ENCODE measurements at regions of chr15 and their contacts with region 1.

Region 1: GRCh38 chr15:60128000-60128376 is 123.9 kb downstream of the FOXB1 start:
- DNase-seq: no peak
- ATAC-seq: no peak
- H3K4me3 Mint-ChIP-seq: peak overlapping the region; percentile 80
- H3K27ac Mint-ChIP-seq: peak overlapping the region; percentile 90
- H3K4me1 Mint-ChIP-seq: peaks cover 52% of the 10 kb centered on the region
- H3K27me3 Mint-ChIP-seq: peaks cover 4% of the 10 kb centered on the region

Region 2: GRCh38 chr15:59997070-59997701 is 130.8 kb before region 1 on chr15:
- CTCF ChIA-PET with region 1: interaction called, 19 read pairs
- DNase-seq: peak; percentile 90
- ATAC-seq: peak; percentile 96
- H3K4me3 Mint-ChIP-seq: peak overlapping the region; percentile 79
- H3K27ac Mint-ChIP-seq: peak overlapping the region; percentile 82
- H3K4me1 Mint-ChIP-seq: peaks cover 78% of the 10 kb centered on the region
- H3K27me3 Mint-ChIP-seq: peaks cover 96% of the 10 kb centered on the region

Region 3: GRCh38 chr15:60006203-60006862 is 121.7 kb before region 1 on chr15:
- CTCF ChIA-PET with region 1: interaction called, 19 read pairs
- DNase-seq: peak; percentile 91
- ATAC-seq: peak; percentile 71
- H3K4me3 Mint-ChIP-seq: peak overlapping the region; percentile 94
- H3K27ac Mint-ChIP-seq: peak overlapping the region; percentile 94
- H3K4me1 Mint-ChIP-seq: peaks cover 39% of the 10 kb centered on the region
- H3K27me3 Mint-ChIP-seq: peaks cover 79% of the 10 kb centered on the region

Measured in activated CD8-positive, alpha-beta memory T cell treated with anti-CD3 and anti-CD28 coated beads, Interleukin-2, amount 10 ng/mL, durations not matched to agents 7 days and 5 days (primary cell).